ENCODE measurements at regions of chr18 and their contacts with region 1.

Region 1: GRCh38 chr18:31942999-31943865 is at the start of gene TRAPPC8:
- DNase-seq: peak; percentile 98 to 99 (median 99)
- ATAC-seq: peak; percentile 99
- H3K4me3 ChIP-seq: peak within 1 kb of the TSS; percentile 79
- H3K27ac ChIP-seq: peak within 1 kb of the TSS; percentile 83
- H3K4me1 ChIP-seq: peaks cover 3% of the 10 kb centered on the region
- H3K27me3 ChIP-seq: no peaks in the 10 kb centered on the region
- total RNA-seq, gene TRAPPC8: 30.3 to 33.6 (median 32.0) TPM

Region 2: DNA sequence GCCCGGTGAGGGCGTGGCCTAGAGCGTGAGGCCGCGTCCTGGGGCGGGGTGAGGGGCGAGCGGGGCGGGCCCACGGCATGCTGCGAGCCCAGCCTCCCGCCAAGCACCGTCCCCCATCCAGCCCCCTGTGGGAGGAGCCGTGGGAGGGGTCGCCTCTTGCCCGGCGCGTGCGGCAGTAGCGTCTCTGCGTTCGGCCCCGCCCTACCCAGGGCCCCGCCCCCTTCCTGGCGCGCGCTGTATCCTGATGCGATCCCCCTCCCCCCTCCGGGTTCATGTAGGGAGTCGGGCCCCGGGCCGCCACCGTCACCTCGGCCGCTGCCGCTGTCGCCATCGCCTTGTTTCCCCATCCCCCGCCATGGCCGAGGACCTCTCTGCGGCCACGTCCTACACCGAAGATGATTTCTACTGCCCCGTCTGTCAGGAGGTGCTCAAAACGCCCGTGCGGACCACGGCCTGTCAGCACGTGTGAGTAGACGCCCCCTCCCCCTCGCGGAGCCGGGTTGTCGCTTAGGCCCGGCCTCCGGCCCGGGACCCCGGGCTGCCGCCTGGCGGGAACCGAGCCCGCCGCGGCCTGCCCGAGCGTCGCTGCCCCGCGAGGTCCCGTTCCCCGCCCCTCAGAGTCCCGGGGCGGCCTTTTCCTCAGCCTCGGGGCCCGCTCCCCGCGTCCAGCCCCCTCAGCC is 149.3 kb after region 1 on chr18:
- intact Hi-C with region 1: loop called in 2 of 4 experiments (anchors 2 to 10 kb)
- DNase-seq: peak; percentile 99 to 100 (median 100)
- ATAC-seq: peak; percentile 99 to 100
- H3K4me3 ChIP-seq: peak overlapping the region; percentile 94
- H3K27ac ChIP-seq: peak overlapping the region; percentile 100
- H3K4me1 ChIP-seq: no peaks in the 10 kb centered on the region
- H3K27me3 ChIP-seq: no peaks in the 10 kb centered on the region

Measured in right cardiac atrium (tissue), 5 donors.